IMR-90 (cell line): ENCODE measurements at regions of chr6 and their contacts with region 1.

Region 1: GRCh38 chr6:7107578-7108195 is at the start of gene RREB1:
- DNase-seq: peak; percentile 54
- ATAC-seq: peak; percentile 46
- H3K4me3 ChIP-seq: peak within 1 kb of the TSS; percentile 96
- H3K27ac ChIP-seq: peak within 1 kb of the TSS; percentile 99
- H3K4me1 ChIP-seq: peaks cover 7% of the 10 kb centered on the region
- H3K27me3 ChIP-seq: no peaks in the 10 kb centered on the region
- CTCF ChIP-seq: no peak
- POLR2A ChIP-seq: no peak
- RAD21 ChIP-seq: no peak
- total RNA-seq, gene RREB1: 8.4 and 8.6 TPM in 2 replicates

Region 2: DNA sequence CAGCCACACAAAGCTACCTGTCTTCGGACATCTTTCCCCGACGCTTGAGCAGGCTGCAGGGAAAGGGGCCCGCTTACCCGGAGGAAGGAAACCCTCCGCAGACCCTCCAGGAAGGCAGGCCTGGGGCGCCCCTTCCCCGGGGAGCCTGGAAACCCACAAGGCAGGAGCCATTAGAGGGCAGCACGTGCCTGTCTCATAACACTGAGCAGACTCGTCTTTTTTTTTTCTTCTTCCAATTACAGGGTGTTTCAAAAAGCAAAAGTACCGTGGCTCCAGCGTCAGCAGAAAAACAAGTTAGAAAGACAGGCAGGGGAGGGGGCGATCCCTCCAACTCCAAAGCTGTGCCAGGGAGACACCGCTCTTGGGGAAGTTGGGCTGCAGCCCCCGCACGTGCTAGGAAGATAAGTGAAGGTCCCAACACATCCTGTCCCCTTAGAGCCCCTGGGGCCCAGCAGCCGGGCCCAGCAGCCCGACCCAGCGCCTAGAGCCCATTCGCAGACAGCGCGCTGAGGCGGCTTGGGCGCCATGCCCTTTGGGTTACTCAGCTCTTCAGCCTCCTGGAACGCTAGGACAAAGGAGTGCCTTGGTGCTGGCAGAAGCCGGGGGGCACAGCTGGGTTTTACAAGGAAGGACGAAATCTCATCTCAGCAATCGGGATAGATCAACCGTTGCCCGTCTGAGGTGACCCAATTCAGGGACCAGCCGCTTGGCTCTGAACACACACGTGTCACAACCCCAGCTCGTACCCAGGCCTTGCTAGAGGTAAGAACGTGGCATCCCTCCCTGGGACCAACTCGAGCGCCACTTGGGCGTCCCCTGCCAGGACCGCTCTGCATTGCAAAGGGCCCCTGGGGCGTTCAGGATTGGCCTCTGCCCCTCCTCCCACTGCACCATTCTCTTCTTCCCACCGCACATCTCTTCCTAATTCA is 382.9 kb before region 1 on chr6:
- CTCF ChIA-PET with region 1: no interaction called
- POLR2A ChIA-PET with region 1: no interaction called
- dilution Hi-C with region 1: no loop called
- in situ Hi-C with region 1: no loop called
- intact Hi-C with region 1: loop called (anchors 2 kb)
- DNase-seq: peak; percentile 76
- ATAC-seq: peak; percentile 96
- H3K4me3 ChIP-seq: peak overlapping the region; percentile 39
- H3K27ac ChIP-seq: peak overlapping the region; percentile 8
- H3K4me1 ChIP-seq: peaks cover 5% of the 10 kb centered on the region
- H3K27me3 ChIP-seq: no peaks in the 10 kb centered on the region
- CTCF ChIP-seq: peak; percentile 80
- POLR2A ChIP-seq: no peak
- RAD21 ChIP-seq: peak; percentile 84

Region 3: GRCh38 chr6:6856538-6857523 is 250.9 kb before region 1 on chr6:
- CTCF ChIA-PET with region 1: no interaction called
- POLR2A ChIA-PET with region 1: no interaction called
- dilution Hi-C with region 1: no loop called
- in situ Hi-C with region 1: no loop called
- intact Hi-C with region 1: loop called (anchors 10 kb)
- DNase-seq: peak; percentile 37
- ATAC-seq: peak; percentile 46
- H3K4me3 ChIP-seq: no peak overlapping the region
- H3K27ac ChIP-seq: no peak overlapping the region
- H3K4me1 ChIP-seq: peaks cover 9% of the 10 kb centered on the region
- H3K27me3 ChIP-seq: no peaks in the 10 kb centered on the region
- CTCF ChIP-seq: no peak
- POLR2A ChIP-seq: no peak
- RAD21 ChIP-seq: no peak

Region 4: DNA sequence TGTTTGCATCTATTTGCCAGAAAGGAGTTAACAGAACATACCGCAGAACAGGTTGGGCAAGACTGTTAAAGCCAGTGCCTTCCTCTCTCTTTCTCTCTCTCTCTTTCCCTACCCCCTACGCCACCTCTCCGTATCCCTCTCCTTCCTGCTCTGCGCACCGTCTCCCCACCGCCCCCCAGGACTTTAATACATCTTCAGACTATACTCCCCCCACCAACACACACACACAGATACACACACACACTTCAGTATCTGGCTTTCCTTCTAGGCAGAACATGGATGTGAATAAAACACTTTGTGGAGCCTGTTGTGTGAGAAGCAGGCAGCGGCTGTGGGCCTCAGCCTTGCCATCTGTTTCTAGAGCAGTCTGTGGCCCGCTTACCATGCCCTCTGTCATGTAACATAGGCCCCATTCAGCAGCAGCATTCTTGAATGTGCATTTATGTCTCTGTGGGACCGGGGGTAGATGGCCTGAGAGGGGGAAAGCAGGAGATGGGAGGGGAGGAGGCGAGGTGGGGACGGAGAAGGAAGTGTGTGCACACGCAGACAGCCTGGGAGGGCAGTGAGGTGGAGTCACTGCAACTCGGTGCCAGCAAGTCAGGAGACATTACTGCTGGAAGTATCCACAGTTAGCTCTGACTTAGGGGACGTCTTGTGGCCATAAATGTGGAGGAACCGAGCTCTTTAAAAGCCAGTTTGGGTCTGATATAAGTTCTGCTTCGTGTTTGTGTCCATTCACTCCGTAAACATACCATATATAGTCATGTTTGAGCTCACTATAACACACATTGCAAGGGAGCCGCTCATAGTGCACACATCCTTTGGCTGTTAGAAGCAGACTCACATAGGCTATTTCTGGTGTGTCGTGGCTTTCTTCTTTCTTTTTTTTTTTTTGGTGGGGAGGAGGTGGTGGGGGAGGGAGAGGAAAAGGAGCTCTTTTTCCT is 38.5 kb after region 1 on chr6:
- CTCF ChIA-PET with region 1: no interaction called
- POLR2A ChIA-PET with region 1: no interaction called
- dilution Hi-C with region 1: no loop called
- in situ Hi-C with region 1: no loop called
- intact Hi-C with region 1: loop called (anchors 2 kb)
- DNase-seq: peak; percentile 80
- ATAC-seq: peak; percentile 72
- H3K4me3 ChIP-seq: peak overlapping the region; percentile 9; the same call in 1 of the 2 replicates
- H3K27ac ChIP-seq: peak overlapping the region; percentile 92
- H3K4me1 ChIP-seq: peaks cover 36% of the 10 kb centered on the region
- H3K27me3 ChIP-seq: no peaks in the 10 kb centered on the region
- CTCF ChIP-seq: no peak
- POLR2A ChIP-seq: peak; percentile 53; the same call in 1 of the 2 replicates
- RAD21 ChIP-seq: no peak

Region 5: DNA sequence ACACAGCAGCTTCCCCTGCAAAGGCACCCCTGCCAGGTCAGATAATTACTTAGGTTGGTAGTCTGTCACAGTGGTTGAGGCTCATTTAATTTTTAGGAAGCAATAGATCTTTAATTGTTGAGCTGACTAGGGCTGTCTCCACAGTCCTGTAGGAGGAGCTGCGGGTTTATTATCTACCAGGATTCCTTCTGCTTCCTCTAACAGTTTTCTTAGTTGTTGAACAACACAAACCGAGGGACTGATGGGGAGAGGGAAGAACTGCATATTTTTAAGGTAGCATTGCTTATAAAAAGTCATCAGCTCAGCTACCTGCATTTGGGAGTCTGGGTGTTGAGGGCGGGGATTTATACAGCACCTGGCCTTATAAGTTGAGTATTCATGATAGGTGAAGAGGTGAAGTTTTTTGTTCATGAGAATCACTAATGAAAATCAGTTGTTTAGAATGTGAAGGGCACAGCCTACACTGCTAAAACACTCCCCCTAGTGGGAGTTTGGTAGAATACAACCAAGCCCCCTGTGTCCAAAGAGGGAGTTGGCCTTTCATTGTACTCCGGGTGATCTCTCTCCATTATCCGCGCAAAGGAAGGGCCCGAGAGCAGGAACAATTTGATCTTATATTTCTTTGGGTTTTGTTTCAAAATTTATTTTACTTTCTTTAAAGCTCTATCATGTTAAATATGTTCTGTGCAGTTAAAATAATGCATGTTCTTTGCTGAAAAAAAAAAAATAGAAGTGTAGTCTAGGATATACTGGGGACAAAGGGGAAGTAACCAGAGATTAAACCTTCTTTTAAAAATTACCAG is 135.7 kb after region 1 on chr6:
- CTCF ChIA-PET with region 1: no interaction called
- POLR2A ChIA-PET with region 1: no interaction called
- dilution Hi-C with region 1: no loop called
- in situ Hi-C with region 1: no loop called
- intact Hi-C with region 1: loop called (anchors 2 kb)
- DNase-seq: peak; percentile 64
- ATAC-seq: peak; percentile 82
- H3K4me3 ChIP-seq: no peak overlapping the region
- H3K27ac ChIP-seq: peak overlapping the region; percentile 49; the same call in 1 of the 2 replicates
- H3K4me1 ChIP-seq: peaks cover 11% of the 10 kb centered on the region
- H3K27me3 ChIP-seq: no peaks in the 10 kb centered on the region
- CTCF ChIP-seq: peak; percentile 90
- POLR2A ChIP-seq: no peak
- RAD21 ChIP-seq: peak; percentile 86

Region 6: DNA sequence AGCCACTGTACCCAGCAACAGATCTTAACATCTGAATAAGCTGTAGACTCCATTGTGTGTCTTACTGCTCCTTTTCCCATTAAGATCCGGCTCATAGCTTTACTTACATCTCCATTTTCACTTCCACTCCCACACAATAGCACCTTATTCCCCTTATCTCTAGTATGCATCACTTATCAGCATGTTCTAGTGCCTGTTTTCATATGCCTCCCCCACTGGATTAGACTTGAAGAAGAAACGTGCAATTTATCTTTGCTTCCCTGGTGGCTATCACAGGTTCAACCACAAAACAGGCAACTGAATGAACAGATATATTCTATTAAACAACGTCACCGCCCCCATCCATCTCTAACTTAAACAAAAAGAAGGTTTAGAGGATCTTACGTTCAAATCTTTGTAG is 193.2 kb after region 1 on chr6:
- CTCF ChIA-PET with region 1: no interaction called
- POLR2A ChIA-PET with region 1: no interaction called
- dilution Hi-C with region 1: no loop called
- in situ Hi-C with region 1: no loop called
- intact Hi-C with region 1: no loop called
- DNase-seq: no peak
- ATAC-seq: no peak
- H3K4me3 ChIP-seq: no peak overlapping the region
- H3K27ac ChIP-seq: no peak overlapping the region
- H3K4me1 ChIP-seq: no peaks in the 10 kb centered on the region
- H3K27me3 ChIP-seq: no peaks in the 10 kb centered on the region
- CTCF ChIP-seq: no peak
- POLR2A ChIP-seq: no peak
- RAD21 ChIP-seq: no peak